HepG2 (cell line): ENCODE measurements at regions of chr1 and their contacts with region 1.

Region 1: DNA sequence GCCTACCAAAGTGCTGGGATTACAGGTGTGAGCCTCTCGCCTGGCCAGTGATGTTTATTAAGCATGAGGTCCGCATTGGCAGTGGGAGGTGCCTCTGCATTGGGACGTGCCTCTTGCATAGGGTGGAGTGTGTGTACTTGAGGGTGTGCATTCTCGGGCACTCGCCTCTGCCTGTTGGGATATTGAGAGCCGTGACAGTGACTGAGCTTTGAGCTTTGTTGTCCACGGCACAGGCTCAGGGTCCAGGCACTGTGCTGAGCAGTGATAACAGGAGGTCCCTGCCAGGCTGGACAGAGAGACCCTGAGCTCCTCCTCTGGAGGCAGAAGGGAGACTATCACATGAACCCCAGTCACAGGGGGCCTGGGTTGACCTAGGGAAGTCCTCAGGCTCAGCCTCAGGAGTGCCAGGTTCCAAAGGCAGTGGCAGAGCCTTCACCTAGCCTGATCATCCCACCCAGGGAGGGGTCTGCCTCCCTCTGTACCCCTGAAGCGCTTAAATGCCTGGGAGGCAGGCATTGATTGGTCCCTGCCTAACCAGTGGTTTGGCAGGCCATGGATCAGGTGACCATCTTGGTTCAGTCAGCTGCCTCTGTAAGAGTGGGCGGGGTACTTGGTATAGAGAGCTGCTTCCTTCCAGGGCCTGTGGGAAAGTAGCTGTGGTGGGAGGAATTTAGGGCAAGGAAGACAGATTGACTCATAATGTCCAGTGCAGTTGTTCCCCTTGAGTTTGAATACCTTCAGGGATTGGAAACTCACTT is 213.8 kb upstream of the TMEM51 start:
- DNase-seq: peak; percentile 82
- ATAC-seq: peak; percentile 89
- H3K4me3 ChIP-seq: peak overlapping the region in 1 of 3 experiments; percentile 51; a peak in 2 of 6 replicates
- H3K27ac ChIP-seq: peak overlapping the region; percentile 86
- H3K4me1 ChIP-seq: peaks cover 99% of the 10 kb centered on the region
- H3K27me3 ChIP-seq: no peaks in the 10 kb centered on the region
- CTCF ChIP-seq: no peak
- EP300 ChIP-seq: no peak
- POLR2A ChIP-seq: peak; percentile 33 to 85; a peak in 3 of 4 replicates
- RAD21 ChIP-seq: 0 out of 2 replicates have a peak, but pooled peaks have one; percentile 15

Region 2: DNA sequence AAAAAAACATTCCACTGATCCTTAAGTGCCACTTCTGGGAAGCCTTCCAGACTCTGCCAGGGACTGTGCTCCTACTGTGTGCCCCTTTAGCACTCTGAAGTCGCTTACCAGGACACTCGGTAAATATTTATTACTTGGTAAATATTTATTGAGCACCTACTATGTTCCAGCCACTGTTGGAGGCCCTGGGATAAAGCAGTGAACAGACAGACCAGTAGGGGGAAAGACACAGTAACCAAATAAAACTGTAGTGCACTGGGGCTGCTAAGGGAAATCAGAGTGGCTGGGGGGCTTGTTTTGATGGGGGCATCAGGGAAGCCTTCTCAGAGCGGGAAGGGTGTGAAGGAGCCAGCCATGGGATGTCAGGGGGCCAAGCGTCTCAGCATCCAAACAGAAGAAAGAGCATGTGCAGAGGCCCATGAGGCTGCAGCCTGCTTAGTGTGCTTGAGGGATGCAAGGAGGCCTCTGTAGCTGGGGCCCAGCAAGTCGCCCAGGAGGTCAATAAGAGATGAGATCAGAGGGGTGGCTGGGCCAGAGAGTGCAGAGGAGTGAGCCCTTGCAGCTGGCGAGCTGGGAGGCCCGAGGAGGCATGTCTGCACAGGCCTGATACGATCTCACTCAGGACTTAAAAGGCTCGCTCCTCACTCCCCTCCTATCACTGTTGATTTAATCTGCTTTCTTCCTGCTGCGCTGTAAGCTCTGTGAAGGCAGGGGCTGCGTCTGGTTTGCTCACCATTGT is 312.7 kb before region 1 on chr1:
- CTCF ChIA-PET with region 1: no interaction called
- POLR2A ChIA-PET with region 1: no interaction called
- in situ Hi-C with region 1: no loop called
- intact Hi-C with region 1: no loop called
- DNase-seq: no peak
- ATAC-seq: no peak; the same call in 2 of the 3 replicates
- H3K4me3 ChIP-seq: no peak overlapping the region
- H3K27ac ChIP-seq: no peak overlapping the region
- H3K4me1 ChIP-seq: no peaks in the 10 kb centered on the region
- H3K27me3 ChIP-seq: peaks cover 0 to 39% of the 10 kb centered on the region in 2 experiments; a peak in 2 of 5 replicates
- CTCF ChIP-seq: no peak
- EP300 ChIP-seq: no peak
- POLR2A ChIP-seq: no peak
- RAD21 ChIP-seq: no peak

Region 3: GRCh38 chr1:14954210-14954609 is 14.5 kb after region 1 on chr1:
- CTCF ChIA-PET with region 1: no interaction called
- POLR2A ChIA-PET with region 1: interaction called, 109 read pairs
- in situ Hi-C with region 1: no loop called
- intact Hi-C with region 1: loop called (anchors 1 kb)
- DNase-seq: no peak
- ATAC-seq: no peak
- H3K4me3 ChIP-seq: no peak overlapping the region
- H3K27ac ChIP-seq: peak overlapping the region; percentile 88
- H3K4me1 ChIP-seq: peaks cover 97% of the 10 kb centered on the region
- H3K27me3 ChIP-seq: no peaks in the 10 kb centered on the region
- CTCF ChIP-seq: no peak
- EP300 ChIP-seq: no peak
- POLR2A ChIP-seq: no peak
- RAD21 ChIP-seq: no peak